Activated CD4-positive, alpha-beta memory T cell treated with anti-CD3 and anti-CD28 coated beads for 36 hours (primary cell): ENCODE measurements at regions of chr14 and their contacts with region 1.

Region 1: GRCh38 chr14:67695394-67695949 is at the start of gene RDH11:
- DNase-seq: peak; percentile 91
- H3K4me3 Mint-ChIP-seq: peak within 1 kb of the TSS; percentile 90
- H3K27ac Mint-ChIP-seq: peak within 1 kb of the TSS; percentile 93
- H3K4me1 Mint-ChIP-seq: peaks cover 24% of the 10 kb centered on the region
- H3K27me3 Mint-ChIP-seq: no peaks in the 10 kb centered on the region
- total RNA-seq, gene RDH11: 70.9 to 76.7 TPM

Region 2: DNA sequence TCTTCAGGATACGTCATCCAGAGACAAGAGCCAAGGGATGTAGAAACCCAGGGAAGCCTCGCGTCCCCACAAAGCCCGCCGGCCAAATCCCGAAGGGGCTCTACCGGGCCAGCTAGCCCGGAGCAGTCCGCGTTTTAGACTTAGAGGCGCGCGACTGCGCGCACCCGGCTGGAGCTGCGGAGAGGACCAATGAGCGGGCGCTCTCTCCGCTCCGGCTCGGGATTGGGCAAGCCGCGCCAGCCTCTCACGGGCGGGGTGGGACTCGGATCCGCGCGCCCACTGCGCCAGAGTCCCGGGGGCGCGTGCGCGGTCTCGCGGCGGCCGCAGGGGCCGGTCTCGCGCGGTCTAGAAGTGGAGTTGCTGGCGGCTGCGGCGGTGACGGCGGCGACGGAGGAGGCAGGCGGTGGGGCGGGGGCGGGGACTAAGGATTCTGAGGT is 454.5 kb before region 1 on chr14:
- CTCF ChIA-PET with region 1: no interaction called
- POLR2A ChIA-PET with region 1: no interaction called
- intact Hi-C with region 1: loop called (anchors 10 kb)
- DNase-seq: peak; percentile 96
- H3K4me3 Mint-ChIP-seq: peak overlapping the region; percentile 82
- H3K27ac Mint-ChIP-seq: peak overlapping the region; percentile 83
- H3K4me1 Mint-ChIP-seq: peaks cover 8% of the 10 kb centered on the region
- H3K27me3 Mint-ChIP-seq: no peaks in the 10 kb centered on the region

Region 3: DNA sequence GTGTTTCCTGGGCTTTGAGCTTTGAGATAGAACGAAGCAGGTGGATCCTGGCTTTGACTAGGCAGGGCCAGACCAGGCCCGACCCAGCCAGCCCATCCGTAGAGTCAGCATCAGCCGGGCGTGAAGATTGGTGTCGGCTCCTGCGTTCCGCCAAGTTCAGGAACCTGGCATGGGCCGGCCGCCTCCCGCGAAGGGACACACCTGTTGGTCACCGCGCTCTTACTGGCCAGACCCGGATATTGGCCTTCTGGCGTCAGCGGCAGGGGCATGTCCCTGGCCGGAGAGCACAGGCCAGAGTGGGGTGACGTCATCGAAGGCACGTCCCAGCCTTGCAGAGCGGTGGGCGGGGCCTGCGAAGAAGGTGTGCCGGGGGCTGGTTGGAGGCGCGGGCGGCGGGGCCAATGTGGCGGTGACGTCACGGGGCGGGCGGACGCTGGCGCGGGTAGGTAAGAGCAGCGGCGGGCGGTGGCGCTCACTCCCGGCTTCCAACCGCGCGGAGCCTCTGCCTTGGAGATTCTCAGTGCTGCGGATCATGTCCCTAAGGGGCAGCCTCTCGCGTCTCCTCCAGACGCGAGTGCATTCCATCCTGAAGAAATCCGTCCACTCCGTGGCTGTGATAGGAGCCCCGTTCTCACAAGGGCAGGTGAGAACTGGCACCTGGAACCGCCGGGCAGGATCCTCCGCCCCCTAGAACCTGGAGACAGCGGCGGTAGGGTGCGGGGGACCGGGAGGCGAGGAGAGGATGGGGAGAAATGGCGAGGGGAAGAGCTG is 75.8 kb before region 1 on chr14 and contains the start of gene ARG2:
- CTCF ChIA-PET with region 1: interaction called, 10 read pairs
- POLR2A ChIA-PET with region 1: interaction called, 6 read pairs
- intact Hi-C with region 1: loop called (anchors 2 kb)
- DNase-seq: peak; percentile 98
- H3K4me3 Mint-ChIP-seq: peak within 1 kb of the TSS; percentile 84
- H3K27ac Mint-ChIP-seq: no peak within 1 kb of the TSS
- H3K4me1 Mint-ChIP-seq: peaks cover 26% of the 10 kb centered on the region
- H3K27me3 Mint-ChIP-seq: peaks cover 15% of the 10 kb centered on the region
- total RNA-seq, gene ARG2: 6.8 to 7.6 TPM

Region 4: DNA sequence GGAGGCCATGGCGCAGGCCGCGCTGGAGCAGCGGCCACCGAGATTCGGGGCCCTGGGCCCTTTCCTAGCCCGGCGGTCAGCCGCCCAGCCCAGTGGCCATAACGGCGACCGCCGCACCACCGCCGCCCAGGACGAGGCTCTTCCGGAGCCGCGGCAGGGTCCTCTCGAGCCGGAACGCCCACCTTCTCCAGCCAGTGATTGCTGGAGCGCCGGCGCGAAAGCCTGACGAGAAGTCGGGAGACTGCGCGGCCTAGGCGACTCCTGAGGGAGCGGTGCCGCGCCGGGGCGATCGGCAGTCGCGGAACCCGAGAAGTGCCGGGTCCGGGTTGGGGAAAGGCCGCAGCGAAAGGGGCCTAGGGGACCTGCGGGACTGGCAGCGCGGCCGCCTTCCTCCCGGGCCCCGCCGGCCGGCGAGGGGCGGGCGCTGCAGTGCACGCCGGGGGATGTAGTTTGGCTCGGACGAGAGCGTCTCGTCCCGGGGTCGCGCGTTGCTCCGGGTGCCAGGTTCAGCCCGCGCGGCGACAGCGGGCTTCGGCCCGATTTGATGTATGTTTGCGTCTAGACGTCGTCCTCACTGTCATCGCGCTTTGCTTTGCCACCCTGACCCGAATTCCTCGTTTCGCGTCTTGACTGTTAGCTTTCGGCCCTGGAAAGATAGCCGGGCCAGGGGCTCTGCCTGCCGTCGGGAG is 20.8 kb before region 1 on chr14 and contains the start of gene VTI1B:
- CTCF ChIA-PET with region 1: interaction called, 5 read pairs
- POLR2A ChIA-PET with region 1: interaction called, 16 read pairs
- intact Hi-C with region 1: loop called (anchors 1 kb)
- DNase-seq: peak; percentile 79
- H3K4me3 Mint-ChIP-seq: peak within 1 kb of the TSS; percentile 86
- H3K27ac Mint-ChIP-seq: peak within 1 kb of the TSS; percentile 83
- H3K4me1 Mint-ChIP-seq: peaks cover 42% of the 10 kb centered on the region
- H3K27me3 Mint-ChIP-seq: no peaks in the 10 kb centered on the region
- total RNA-seq, gene VTI1B: 75.6 to 75.8 TPM

Region 5: DNA sequence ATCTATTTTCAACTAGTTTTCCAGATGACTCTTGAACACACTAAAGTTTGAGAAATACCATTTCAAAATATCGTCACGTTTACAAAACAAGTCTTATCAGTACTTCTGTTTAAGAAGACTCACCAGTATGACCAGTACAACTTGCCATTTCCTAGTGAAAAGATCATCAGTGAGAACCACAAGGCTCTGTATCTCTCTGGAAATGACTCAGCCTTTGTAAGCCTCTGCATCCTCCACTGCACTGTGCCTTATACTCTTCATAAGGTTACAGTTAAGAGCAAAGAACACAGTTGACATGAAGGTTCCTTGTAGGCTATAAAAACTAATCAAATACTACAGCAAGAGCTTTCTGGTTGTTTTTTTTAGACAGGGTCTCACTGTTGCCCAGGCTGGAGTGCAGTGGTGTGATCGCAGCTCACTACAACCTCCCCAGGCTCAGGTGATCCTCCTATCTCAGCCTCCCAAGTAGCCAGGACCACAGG is 15.3 kb before region 1 on chr14:
- CTCF ChIA-PET with region 1: interaction called, 5 read pairs
- POLR2A ChIA-PET with region 1: interaction called, 16 read pairs
- intact Hi-C with region 1: loop called (anchors 1 kb)
- DNase-seq: peak; percentile 47
- H3K4me3 Mint-ChIP-seq: no peak overlapping the region
- H3K27ac Mint-ChIP-seq: peak overlapping the region; percentile 64
- H3K4me1 Mint-ChIP-seq: peaks cover 42% of the 10 kb centered on the region
- H3K27me3 Mint-ChIP-seq: no peaks in the 10 kb centered on the region

Region 6: GRCh38 chr14:67816326-67817002 is 121.0 kb after region 1 on chr14 and contains the start of gene ZFYVE26:
- CTCF ChIA-PET with region 1: no interaction called
- POLR2A ChIA-PET with region 1: interaction called, 4 read pairs
- intact Hi-C with region 1: loop called (anchors 2 kb)
- DNase-seq: peak; percentile 95
- H3K4me3 Mint-ChIP-seq: peak within 1 kb of the TSS; percentile 93
- H3K27ac Mint-ChIP-seq: peak within 1 kb of the TSS; percentile 90
- H3K4me1 Mint-ChIP-seq: peaks cover 50% of the 10 kb centered on the region
- H3K27me3 Mint-ChIP-seq: no peaks in the 10 kb centered on the region
- total RNA-seq, gene ZFYVE26: 12.5 to 12.6 TPM

Region 7: DNA sequence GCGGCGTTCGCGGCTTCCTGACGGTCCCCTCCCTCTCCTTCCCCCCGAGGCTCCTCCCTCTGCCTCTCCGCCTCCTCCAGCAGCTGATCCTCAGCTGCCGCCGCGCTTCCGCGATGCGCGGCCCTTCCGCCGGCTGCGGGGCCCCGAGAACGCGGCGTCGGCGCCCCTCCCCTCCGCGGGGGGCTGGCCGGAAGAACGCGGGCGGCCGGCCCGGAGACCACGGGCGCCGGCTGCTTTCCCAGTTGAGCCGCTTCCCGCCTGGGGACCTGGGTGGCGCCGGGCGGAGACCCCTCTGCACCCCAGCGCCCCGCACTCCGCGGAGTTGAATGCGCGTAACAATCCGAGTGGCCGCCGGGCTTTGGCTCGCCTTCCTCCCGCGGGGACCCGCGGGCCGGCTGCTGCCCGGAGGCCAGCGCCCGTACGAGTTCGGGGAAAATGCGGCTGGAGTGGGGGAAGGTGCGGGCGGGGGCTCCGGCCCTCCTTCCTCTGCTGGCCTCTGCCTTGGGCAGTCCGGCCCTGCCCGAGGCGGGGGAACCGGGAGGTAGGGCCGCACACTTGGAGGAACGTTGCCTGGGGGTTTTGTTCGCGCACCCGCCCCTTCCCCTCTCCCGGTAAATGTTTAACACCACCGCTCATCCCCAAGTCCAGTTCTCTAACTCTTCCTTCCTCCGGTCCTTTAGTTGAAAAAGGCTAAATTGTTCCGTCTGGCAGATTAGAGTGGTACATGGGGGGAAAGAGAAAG is 1457.8 kb after region 1 on chr14:
- CTCF ChIA-PET with region 1: no interaction called
- POLR2A ChIA-PET with region 1: no interaction called
- intact Hi-C with region 1: loop called (anchors 5 kb)
- DNase-seq: peak; percentile 96
- H3K4me3 Mint-ChIP-seq: peak overlapping the region; percentile 91
- H3K27ac Mint-ChIP-seq: peak overlapping the region; percentile 92
- H3K4me1 Mint-ChIP-seq: peaks cover 33% of the 10 kb centered on the region
- H3K27me3 Mint-ChIP-seq: no peaks in the 10 kb centered on the region